HepG2 (cell line): ENCODE measurements at regions of chr7 and their contacts with region 1.

Region 1: GRCh38 chr7:100889761-100890634 is 483 bp upstream of the UFSP1 start:
- DNase-seq: peak; percentile 84
- ATAC-seq: peak; percentile 87
- H3K4me3 ChIP-seq: peak overlapping the region; percentile 63 to 75 (median 75)
- H3K27ac ChIP-seq: peak overlapping the region; percentile 52
- H3K4me1 ChIP-seq: peaks cover 61% of the 10 kb centered on the region
- H3K27me3 ChIP-seq: peaks cover 6 to 16% of the 10 kb centered on the region in 2 experiments; a peak in 4 of 5 replicates
- CTCF ChIP-seq: no peak
- EP300 ChIP-seq: no peak
- POLR2A ChIP-seq: no peak
- RAD21 ChIP-seq: no peak

Region 2: GRCh38 chr7:100827330-100828227 is 62.4 kb before region 1 on chr7 and contains the start of gene EPHB4:
- CTCF ChIA-PET with region 1: no interaction called
- POLR2A ChIA-PET with region 1: interaction called, 12 read pairs
- in situ Hi-C with region 1: no loop called
- intact Hi-C with region 1: no loop called
- DNase-seq: peak; percentile 90
- ATAC-seq: peak; percentile 81
- H3K4me3 ChIP-seq: peak within 1 kb of the TSS; percentile 81 to 90 (median 87)
- H3K27ac ChIP-seq: peak within 1 kb of the TSS; percentile 69
- H3K4me1 ChIP-seq: peaks cover 71% of the 10 kb centered on the region
- H3K27me3 ChIP-seq: no peaks in the 10 kb centered on the region; a peak in 2 of 5 replicates
- CTCF ChIP-seq: peak; percentile 85
- EP300 ChIP-seq: no peak
- POLR2A ChIP-seq: peak; percentile 51 to 73
- RAD21 ChIP-seq: peak; percentile 67; the same call in 1 of the 2 replicates
- total RNA-seq, gene EPHB4: 43.7 and 69.6 TPM in 2 replicates

Region 3: GRCh38 chr7:100874577-100875355 is 15.2 kb before region 1 on chr7 and contains the start of gene SRRT:
- CTCF ChIA-PET with region 1: no interaction called
- POLR2A ChIA-PET with region 1: interaction called, 141 read pairs
- in situ Hi-C with region 1: no loop called
- intact Hi-C with region 1: no loop called
- DNase-seq: peak; percentile 94
- ATAC-seq: peak; percentile 94
- H3K4me3 ChIP-seq: peak within 1 kb of the TSS; percentile 84 to 89 (median 86)
- H3K27ac ChIP-seq: peak within 1 kb of the TSS; percentile 87
- H3K4me1 ChIP-seq: peaks cover 45% of the 10 kb centered on the region
- H3K27me3 ChIP-seq: peaks cover 0 to 2% of the 10 kb centered on the region in 2 experiments; a peak in 1 of 5 replicates
- CTCF ChIP-seq: peak; percentile 16
- EP300 ChIP-seq: peak in 1 of 2 experiments; percentile 29; a peak in 1 of 4 replicates
- POLR2A ChIP-seq: peak; percentile 91 to 98
- RAD21 ChIP-seq: no peak; the same call in 1 of the 2 replicates
- total RNA-seq, gene SRRT: 79.1 and 106 TPM in 2 replicates

Region 4: GRCh38 chr7:100949227-100949932 is 59.4 kb after region 1 on chr7 and contains the start of gene MUC3A:
- CTCF ChIA-PET with region 1: no interaction called
- POLR2A ChIA-PET with region 1: no interaction called
- in situ Hi-C with region 1: no loop called
- intact Hi-C with region 1: no loop called
- DNase-seq: no peak
- ATAC-seq: peak; percentile 75
- H3K4me3 ChIP-seq: peak within 1 kb of the TSS in 2 of 3 experiments; percentile 28 to 58; a peak in 3 of 6 replicates
- H3K27ac ChIP-seq: no peak within 1 kb of the TSS
- H3K4me1 ChIP-seq: peaks cover 12% of the 10 kb centered on the region; the same call in 1 of the 2 replicates
- H3K27me3 ChIP-seq: peaks cover 2 to 18% of the 10 kb centered on the region in 2 experiments; a peak in 3 of 5 replicates
- CTCF ChIP-seq: no peak
- EP300 ChIP-seq: no peak
- POLR2A ChIP-seq: no peak
- RAD21 ChIP-seq: no peak
- total RNA-seq, gene MUC3A: not detected in 2 replicates

Region 5: GRCh38 chr7:101058355-101058754 is 168.4 kb after region 1 on chr7:
- CTCF ChIA-PET with region 1: interaction called, 5 read pairs
- POLR2A ChIA-PET with region 1: no interaction called
- in situ Hi-C with region 1: loop called (anchors 5 kb)
- intact Hi-C with region 1: no loop called
- DNase-seq: peak; percentile 48
- ATAC-seq: peak; percentile 59; the same call in 2 of the 3 replicates
- H3K4me3 ChIP-seq: no peak overlapping the region
- H3K27ac ChIP-seq: no peak overlapping the region
- H3K4me1 ChIP-seq: no peaks in the 10 kb centered on the region
- H3K27me3 ChIP-seq: peaks cover 0 to 11% of the 10 kb centered on the region in 2 experiments; a peak in 2 of 5 replicates
- CTCF ChIP-seq: peak; percentile 6; the same call in 1 of the 2 replicates
- EP300 ChIP-seq: no peak
- POLR2A ChIP-seq: no peak
- RAD21 ChIP-seq: no peak

Region 6: DNA sequence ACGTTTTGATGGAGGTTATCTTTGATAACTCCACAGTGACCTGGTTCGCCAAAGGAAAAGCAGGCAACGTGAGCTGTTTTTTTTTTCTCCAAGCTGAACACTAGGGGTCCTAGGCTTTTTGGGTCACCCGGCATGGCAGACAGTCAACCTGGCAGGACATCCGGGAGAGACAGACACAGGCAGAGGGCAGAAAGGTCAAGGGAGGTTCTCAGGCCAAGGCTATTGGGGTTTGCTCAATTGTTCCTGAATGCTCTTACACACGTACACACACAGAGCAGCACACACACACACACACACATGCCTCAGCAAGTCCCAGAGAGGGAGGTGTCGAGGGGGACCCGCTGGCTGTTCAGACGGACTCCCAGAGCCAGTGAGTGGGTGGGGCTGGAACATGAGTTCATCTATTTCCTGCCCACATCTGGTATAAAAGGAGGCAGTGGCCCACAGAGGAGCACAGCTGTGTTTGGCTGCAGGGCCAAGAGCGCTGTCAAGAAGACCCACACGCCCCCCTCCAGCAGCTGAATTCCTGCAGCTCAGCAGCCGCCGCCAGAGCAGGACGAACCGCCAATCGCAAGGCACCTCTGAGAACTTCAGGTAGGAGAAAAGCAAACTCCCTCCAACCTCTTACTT is 236.8 kb after region 1 on chr7 and contains the start of gene SERPINE1:
- CTCF ChIA-PET with region 1: no interaction called
- POLR2A ChIA-PET with region 1: interaction called, 11 read pairs
- in situ Hi-C with region 1: no loop called
- intact Hi-C with region 1: no loop called
- DNase-seq: peak; percentile 98
- ATAC-seq: peak; percentile 77
- H3K4me3 ChIP-seq: peak within 1 kb of the TSS; percentile 74 to 82 (median 76)
- H3K27ac ChIP-seq: peak within 1 kb of the TSS; percentile 99
- H3K4me1 ChIP-seq: peaks cover 89% of the 10 kb centered on the region
- H3K27me3 ChIP-seq: no peaks in the 10 kb centered on the region; a peak in 1 of 5 replicates
- CTCF ChIP-seq: peak; percentile 61
- EP300 ChIP-seq: peak; percentile 71 to 80; a peak in 3 of 4 replicates
- POLR2A ChIP-seq: peak; percentile 99
- RAD21 ChIP-seq: peak; percentile 26; the same call in 1 of the 2 replicates
- total RNA-seq, gene SERPINE1: 9.2 and 21.2 TPM in 2 replicates

Region 7: DNA sequence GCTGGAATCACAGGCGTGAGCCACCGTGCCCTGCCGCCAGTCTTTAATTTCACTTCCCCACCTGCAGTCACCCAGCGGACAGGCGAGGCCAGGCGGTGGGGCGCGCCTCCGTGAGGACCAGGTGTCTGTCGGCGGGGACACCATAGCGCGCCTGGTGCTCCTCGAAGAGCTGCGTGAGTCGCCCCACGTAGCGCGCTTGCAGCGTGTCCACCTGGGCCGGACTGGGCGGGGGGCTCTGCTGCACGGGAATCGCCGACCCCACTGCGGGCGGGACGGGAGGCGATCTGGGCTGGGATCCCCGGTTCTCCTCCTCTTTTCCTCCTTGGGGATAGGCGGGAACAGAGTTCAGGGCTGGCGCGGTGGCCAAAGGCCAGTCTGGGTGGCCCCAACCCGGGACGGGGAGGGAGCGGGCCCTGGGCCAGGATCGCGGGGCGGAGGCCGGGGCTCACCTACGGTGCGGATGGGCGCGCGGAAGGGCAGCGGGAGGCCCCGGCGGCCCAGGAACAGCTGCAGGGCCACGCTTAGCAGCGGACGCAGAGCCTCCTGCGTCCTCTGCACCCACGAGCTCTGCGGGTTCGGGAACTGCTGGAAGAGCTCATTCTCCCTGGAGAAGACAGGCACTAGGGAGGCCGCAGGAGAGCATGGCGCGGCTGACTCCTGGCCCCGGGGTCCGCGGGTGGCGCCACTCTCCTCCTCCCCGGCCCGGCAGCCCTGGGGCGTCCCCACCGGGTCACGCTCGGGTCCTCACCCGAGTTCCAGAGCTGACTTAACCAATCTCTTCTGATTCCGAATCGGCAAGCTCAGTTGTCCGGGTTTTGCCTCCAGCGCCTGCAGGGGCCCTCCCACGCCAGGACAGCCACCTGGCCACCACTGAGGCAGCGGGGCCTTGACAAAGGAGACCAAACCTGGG is 312.0 kb after region 1 on chr7:
- CTCF ChIA-PET with region 1: no interaction called
- POLR2A ChIA-PET with region 1: no interaction called
- in situ Hi-C with region 1: no loop called
- intact Hi-C with region 1: no loop called
- DNase-seq: peak; percentile 48
- ATAC-seq: peak; percentile 77
- H3K4me3 ChIP-seq: peak overlapping the region; percentile 74 to 87 (median 84)
- H3K27ac ChIP-seq: peak overlapping the region; percentile 99
- H3K4me1 ChIP-seq: peaks cover 43% of the 10 kb centered on the region
- H3K27me3 ChIP-seq: no peaks in the 10 kb centered on the region; a peak in 1 of 5 replicates
- CTCF ChIP-seq: no peak; the same call in 1 of the 2 replicates
- EP300 ChIP-seq: 0 out of 4 replicates have a peak, but pooled peaks of 1 of the 2 experiments have one; percentile 7
- POLR2A ChIP-seq: peak; percentile 66 to 71; a peak in 3 of 4 replicates
- RAD21 ChIP-seq: 0 out of 2 replicates have a peak, but pooled peaks have one; percentile 31